ENCODE measurements at regions of chr7 and their contacts with region 1.

Region 1: DNA sequence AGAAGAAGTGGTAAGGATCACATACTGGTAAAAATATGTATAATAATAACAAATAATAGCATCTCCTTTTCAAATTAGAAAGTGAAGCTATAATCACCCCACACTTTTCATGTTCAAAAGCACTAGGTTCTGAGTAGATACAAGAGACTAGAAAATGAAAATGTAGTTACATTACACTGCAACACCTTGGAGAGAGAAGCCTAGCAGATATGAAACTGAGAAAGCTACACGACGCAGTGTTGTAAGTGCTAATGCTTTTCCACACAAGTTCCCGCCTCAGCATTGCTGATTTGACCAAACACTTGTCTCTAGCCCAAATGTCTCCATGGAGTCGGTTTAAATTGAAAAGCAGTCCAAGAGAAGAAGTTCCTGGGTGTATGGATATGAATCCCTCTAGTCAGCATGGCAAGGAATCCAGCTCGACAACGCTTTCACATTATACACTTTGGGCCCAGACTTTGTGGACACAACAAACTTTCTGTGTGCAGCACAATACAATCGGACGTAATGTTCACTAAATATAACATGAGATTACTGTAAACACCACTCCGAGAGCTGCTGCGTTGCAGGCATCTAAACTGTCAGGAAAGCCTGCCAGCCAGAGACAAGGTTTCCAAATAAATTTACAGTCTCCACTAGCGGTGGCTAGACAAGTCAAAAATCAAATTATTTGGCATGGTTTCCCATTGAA is 1.7 kb downstream of the PDE1C start:
- DNase-seq: no peak
- H3K4me3 ChIP-seq: peak overlapping the region; percentile 66
- H3K27me3 ChIP-seq: no peaks in the 10 kb centered on the region
- CTCF ChIP-seq: no peak

Region 2: GRCh38 chr7:32164346-32164957 is 95.9 kb after region 1 on chr7:
- CTCF ChIA-PET with region 1: interaction called, 10 read pairs
- POLR2A ChIA-PET with region 1: no interaction called
- DNase-seq: no peak
- H3K4me3 ChIP-seq: no peak overlapping the region
- H3K27me3 ChIP-seq: no peaks in the 10 kb centered on the region
- CTCF ChIP-seq: peak; percentile 68

Measured in BJ (cell line).